B cell (primary cell): ENCODE measurements at regions of chr2 and their contacts with region 1.

Region 1: GRCh38 chr2:53949457-53949856 is 21.3 kb downstream of the PSME4 start:
- DNase-seq: no peak
- ATAC-seq: no peak
- H3K4me3 ChIP-seq: no peak overlapping the region
- H3K4me3 Mint-ChIP-seq: peak overlapping the region; percentile 15
- H3K27ac ChIP-seq: peak overlapping the region in 1 of 2 donors; percentile 48
- H3K27ac Mint-ChIP-seq: peak overlapping the region; percentile 4
- H3K4me1 ChIP-seq: peaks cover 39 to 45% of the 10 kb centered on the region in 2 donors
- H3K4me1 Mint-ChIP-seq: peaks cover 61% of the 10 kb centered on the region
- H3K27me3 ChIP-seq: no peaks in the 10 kb centered on the region
- H3K27me3 Mint-ChIP-seq: no peaks in the 10 kb centered on the region
- CTCF ChIP-seq: no peak

Region 2: DNA sequence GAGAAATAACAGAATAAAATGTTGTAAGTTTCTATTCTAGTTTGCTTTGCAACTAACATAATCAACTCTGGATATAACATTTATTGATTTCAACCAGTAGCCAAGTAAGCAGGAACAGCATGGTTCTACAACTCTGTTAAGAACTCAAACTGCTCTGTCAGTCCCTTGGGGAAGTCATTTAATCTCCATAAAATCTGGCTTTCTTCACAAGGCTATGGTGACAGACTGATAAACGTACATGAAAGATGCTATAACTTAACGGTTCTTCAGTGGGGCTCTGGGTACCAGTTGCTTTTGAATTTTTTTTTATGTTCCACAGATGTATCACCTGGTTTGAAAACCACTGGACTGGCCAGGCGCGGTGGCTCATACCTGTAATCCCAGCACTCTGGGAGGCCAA is 11.0 kb after region 1 on chr2:
- CTCF ChIA-PET with region 1: no interaction called
- POLR2A ChIA-PET with region 1: no interaction called
- intact Hi-C with region 1: no loop called
- DNase-seq: no peak
- ATAC-seq: no peak
- H3K4me3 ChIP-seq: no peak overlapping the region
- H3K4me3 Mint-ChIP-seq: no peak overlapping the region
- H3K27ac ChIP-seq: peak overlapping the region in 1 of 2 donors; percentile 39
- H3K27ac Mint-ChIP-seq: peak overlapping the region; percentile 86
- H3K4me1 ChIP-seq: peaks cover 39 to 40% of the 10 kb centered on the region in 2 donors
- H3K4me1 Mint-ChIP-seq: peaks cover 69% of the 10 kb centered on the region
- H3K27me3 ChIP-seq: no peaks in the 10 kb centered on the region
- H3K27me3 Mint-ChIP-seq: no peaks in the 10 kb centered on the region
- CTCF ChIP-seq: no peak

Region 3: DNA sequence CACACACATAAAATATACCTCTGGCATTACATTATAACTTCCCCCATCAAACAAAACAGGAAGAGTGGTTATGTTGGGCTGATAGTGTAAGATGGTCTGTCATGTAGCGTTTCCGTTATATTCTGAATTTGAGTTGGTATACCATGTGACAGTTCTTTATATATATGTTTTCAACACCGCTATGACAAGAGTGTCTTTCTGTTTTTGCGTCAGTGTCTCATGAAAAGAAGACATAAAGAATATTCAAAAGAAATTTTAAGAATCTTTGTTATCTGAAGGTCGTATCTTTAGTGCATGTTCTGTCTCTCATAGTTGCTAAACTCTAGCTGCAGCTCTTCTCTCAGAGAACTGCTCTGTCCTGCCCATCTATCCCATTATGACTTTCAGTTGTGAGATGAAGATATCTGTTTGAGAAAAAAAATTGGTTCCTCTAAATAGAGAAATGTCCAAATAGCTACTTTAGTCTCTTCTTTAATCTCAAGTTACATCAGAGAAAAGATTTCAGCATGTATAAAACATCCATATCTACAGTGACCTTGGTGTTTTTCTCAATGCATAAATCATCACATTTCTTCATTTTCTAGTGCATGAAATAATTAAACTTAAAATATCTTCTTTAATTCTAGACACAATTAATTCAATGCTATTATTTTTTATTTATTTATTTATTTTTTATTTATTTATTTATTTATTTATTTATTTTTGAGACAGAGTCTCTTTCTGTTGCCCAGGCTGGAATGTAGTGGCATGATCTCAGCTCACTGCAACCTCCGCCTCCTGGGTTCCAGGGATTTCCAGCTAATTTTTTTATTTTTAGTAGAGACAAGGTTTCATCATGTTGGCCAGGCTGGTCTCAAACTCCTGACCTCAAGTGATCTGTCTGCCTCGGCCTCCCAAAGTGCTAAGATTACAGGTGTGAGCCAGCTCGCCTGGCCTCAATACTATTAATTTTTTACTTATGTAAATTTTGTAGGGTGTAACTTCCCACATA is 45.7 kb after region 1 on chr2:
- CTCF ChIA-PET with region 1: interaction called, 4 read pairs
- POLR2A ChIA-PET with region 1: interaction called, 5 read pairs
- intact Hi-C with region 1: loop called (anchors 10 kb)
- DNase-seq: peak; percentile 54
- ATAC-seq: peak; percentile 79
- H3K4me3 ChIP-seq: peak overlapping the region in 4 of 5 experiments; percentile 4 to 51 (median 28)
- H3K4me3 Mint-ChIP-seq: peak overlapping the region; percentile 52
- H3K27ac ChIP-seq: peak overlapping the region; percentile 65
- H3K27ac Mint-ChIP-seq: peak overlapping the region; percentile 37
- H3K4me1 ChIP-seq: peaks cover 34 to 46% of the 10 kb centered on the region in 2 donors
- H3K4me1 Mint-ChIP-seq: peaks cover 22% of the 10 kb centered on the region
- H3K27me3 ChIP-seq: no peaks in the 10 kb centered on the region
- H3K27me3 Mint-ChIP-seq: no peaks in the 10 kb centered on the region
- CTCF ChIP-seq: no peak

Region 4: GRCh38 chr2:54063967-54064535 is 114.6 kb after region 1 on chr2:
- CTCF ChIA-PET with region 1: no interaction called
- POLR2A ChIA-PET with region 1: no interaction called
- intact Hi-C with region 1: no loop called
- DNase-seq: no peak
- ATAC-seq: no peak
- H3K4me3 ChIP-seq: no peak overlapping the region
- H3K4me3 Mint-ChIP-seq: no peak overlapping the region
- H3K27ac ChIP-seq: no peak overlapping the region
- H3K27ac Mint-ChIP-seq: no peak overlapping the region
- H3K4me1 ChIP-seq: peaks cover 3 to 4% of the 10 kb centered on the region in 2 donors
- H3K4me1 Mint-ChIP-seq: peaks cover 10% of the 10 kb centered on the region
- H3K27me3 ChIP-seq: no peaks in the 10 kb centered on the region
- H3K27me3 Mint-ChIP-seq: no peaks in the 10 kb centered on the region
- CTCF ChIP-seq: no peak